CD8-positive, alpha-beta memory T cell (primary cell): ENCODE measurements at regions of chr22 and their contacts with region 1.

Region 1: DNA sequence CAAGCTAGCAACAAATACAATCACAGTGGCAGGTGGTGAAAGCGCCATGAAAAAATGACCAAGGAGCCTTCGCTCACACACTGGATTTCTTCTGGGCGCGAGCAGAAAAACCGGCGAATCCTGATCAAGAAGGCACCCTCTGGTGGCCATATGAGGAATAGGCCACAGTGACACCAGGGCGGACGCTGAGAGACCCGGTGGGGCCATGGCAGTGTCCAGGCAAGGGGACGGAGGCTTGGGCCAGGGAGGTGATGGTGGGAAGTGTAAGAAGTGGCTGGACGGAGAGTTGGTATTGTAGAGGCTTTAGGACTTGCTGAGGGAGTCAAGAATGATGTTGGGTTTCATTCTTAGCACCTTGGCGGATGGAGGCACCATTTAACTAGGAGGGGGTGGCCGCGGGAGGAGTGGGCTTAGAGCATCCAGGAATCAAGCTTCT is 16.9 kb upstream of the RAC2 start:
- DNase-seq: peak; percentile 42 to 79 (median 57)
- H3K4me3 ChIP-seq: no peak overlapping the region
- H3K4me3 Mint-ChIP-seq: peak overlapping the region in 3 of 7 donors; percentile 2 to 46 (median 41)
- H3K27ac ChIP-seq: no peak overlapping the region
- H3K27ac Mint-ChIP-seq: peak overlapping the region in 7 of 8 donors; percentile 12 to 86 (median 53)
- H3K4me1 ChIP-seq: peaks cover 23% of the 10 kb centered on the region
- H3K4me1 Mint-ChIP-seq: peaks cover 7 to 13% (median 10%) of the 10 kb centered on the region in 3 donors
- H3K27me3 ChIP-seq: no peaks in the 10 kb centered on the region
- H3K27me3 Mint-ChIP-seq: peaks cover 0 to 4% of the 10 kb centered on the region in 2 donors

Region 2: GRCh38 chr22:36946421-36947158 is 314.3 kb before region 1 on chr22:
- CTCF ChIA-PET with region 1: no interaction called
- POLR2A ChIA-PET with region 1: no interaction called
- DNase-seq: no peak
- H3K4me3 ChIP-seq: no peak overlapping the region
- H3K4me3 Mint-ChIP-seq: no peak overlapping the region
- H3K27ac ChIP-seq: no peak overlapping the region
- H3K27ac Mint-ChIP-seq: no peak overlapping the region
- H3K4me1 ChIP-seq: no peaks in the 10 kb centered on the region
- H3K4me1 Mint-ChIP-seq: no peaks in the 10 kb centered on the region
- H3K27me3 ChIP-seq: no peaks in the 10 kb centered on the region
- H3K27me3 Mint-ChIP-seq: peaks cover 7 to 26% of the 10 kb centered on the region in 2 donors

Region 3: DNA sequence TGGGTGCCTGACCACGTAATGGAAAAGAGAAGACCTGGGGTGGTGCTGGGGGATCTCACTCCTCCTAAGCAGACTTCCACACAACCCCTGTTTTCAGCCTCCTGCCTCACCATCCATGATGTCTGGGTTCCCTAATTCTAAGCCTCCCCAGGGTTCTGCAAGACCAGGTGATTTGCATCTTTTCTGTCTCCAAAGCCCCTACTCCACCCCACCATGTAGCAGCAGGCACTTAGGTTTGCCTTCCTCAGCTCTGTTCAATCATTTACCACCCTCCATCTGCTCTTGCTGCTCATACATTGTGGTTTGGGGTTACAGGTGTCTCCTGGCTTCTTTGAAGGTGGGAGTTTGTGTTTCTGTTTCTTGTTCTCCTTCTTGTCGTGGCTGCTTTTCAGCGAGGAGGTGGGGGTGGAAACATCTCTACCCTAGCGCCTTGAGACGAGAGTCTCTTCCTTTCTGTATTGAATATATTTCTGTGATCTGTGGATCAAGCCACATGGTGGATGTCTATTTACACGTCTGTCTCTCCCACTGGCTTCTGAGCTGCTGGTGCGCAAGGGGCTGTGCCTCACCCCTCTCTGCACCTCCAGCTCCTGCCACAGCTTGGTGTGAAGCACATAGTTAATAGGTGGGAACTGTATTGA is 42.0 kb before region 1 on chr22:
- CTCF ChIA-PET with region 1: interaction called, 29 read pairs
- POLR2A ChIA-PET with region 1: no interaction called
- DNase-seq: peak; percentile 36 to 94 (median 86)
- H3K4me3 ChIP-seq: peak overlapping the region; percentile 53
- H3K4me3 Mint-ChIP-seq: peak overlapping the region; percentile 6 to 68 (median 61)
- H3K27ac ChIP-seq: no peak overlapping the region
- H3K27ac Mint-ChIP-seq: peak overlapping the region; percentile 46 to 99 (median 94)
- H3K4me1 ChIP-seq: peaks cover 76% of the 10 kb centered on the region
- H3K4me1 Mint-ChIP-seq: peaks cover 63 to 83% (median 76%) of the 10 kb centered on the region in 3 donors
- H3K27me3 ChIP-seq: no peaks in the 10 kb centered on the region
- H3K27me3 Mint-ChIP-seq: no peaks in the 10 kb centered on the region

Region 4: DNA sequence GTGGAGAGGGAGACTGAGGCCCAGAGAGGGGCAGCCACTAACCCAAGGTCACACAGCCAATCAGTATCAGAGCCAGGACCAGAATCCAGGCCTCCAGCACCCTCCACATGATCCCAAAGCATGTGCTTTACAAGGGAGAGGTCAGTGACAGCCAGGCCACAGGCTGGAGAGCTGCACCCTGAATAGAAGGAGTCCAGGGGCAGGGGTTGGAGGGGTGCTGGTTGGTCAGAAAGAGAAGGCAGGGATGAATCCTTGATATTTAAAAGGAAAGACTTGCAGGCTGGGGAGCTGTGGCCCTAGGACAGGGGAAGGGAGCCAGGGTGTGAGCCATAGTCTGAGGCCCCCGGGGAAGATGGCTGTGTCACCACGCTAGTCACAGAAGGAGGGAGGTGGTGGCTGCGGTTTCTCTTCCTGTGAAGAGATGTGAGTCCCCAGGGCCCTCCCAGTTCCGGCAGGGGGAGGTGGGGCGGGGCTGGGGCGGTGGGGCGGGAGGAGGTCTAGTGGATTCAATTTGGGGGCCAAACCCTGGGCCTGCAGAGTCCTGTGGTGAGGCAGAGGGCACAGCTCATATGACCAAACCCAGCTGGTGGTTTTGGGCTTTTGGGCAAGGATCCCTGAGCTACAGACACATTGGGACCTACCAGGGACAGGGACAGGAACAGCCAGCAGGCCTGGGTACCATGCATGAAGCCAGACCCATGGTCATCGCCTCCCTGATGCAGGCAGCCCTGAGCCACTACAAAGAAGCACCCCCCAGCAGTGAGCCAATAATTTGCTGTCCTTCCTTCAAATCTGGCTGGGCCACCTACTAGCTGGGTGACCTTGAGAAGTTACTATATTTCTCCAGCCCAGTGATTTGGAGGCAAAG is 30.9 kb before region 1 on chr22:
- CTCF ChIA-PET with region 1: interaction called, 47 read pairs
- POLR2A ChIA-PET with region 1: interaction called, 5 read pairs
- DNase-seq: peak; percentile 87 to 96 (median 90)
- H3K4me3 ChIP-seq: peak overlapping the region; percentile 85
- H3K4me3 Mint-ChIP-seq: peak overlapping the region; percentile 76 to 89 (median 85)
- H3K27ac ChIP-seq: peak overlapping the region; percentile 93
- H3K27ac Mint-ChIP-seq: peak overlapping the region; percentile 98 to 100 (median 99)
- H3K4me1 ChIP-seq: peaks cover 94% of the 10 kb centered on the region
- H3K4me1 Mint-ChIP-seq: peaks cover 86 to 92% (median 92%) of the 10 kb centered on the region in 3 donors
- H3K27me3 ChIP-seq: no peaks in the 10 kb centered on the region
- H3K27me3 Mint-ChIP-seq: no peaks in the 10 kb centered on the region

Region 5: GRCh38 chr22:37244114-37244921 is 16.6 kb before region 1 on chr22 and contains the start of gene RAC2:
- CTCF ChIA-PET with region 1: interaction called, 233 read pairs
- POLR2A ChIA-PET with region 1: interaction called, 10 read pairs
- DNase-seq: peak; percentile 77 to 93 (median 83)
- H3K4me3 ChIP-seq: peak within 1 kb of the TSS; percentile 100
- H3K4me3 Mint-ChIP-seq: peak within 1 kb of the TSS; percentile 88 to 98 (median 93)
- H3K27ac ChIP-seq: peak within 1 kb of the TSS; percentile 91
- H3K27ac Mint-ChIP-seq: peak within 1 kb of the TSS; percentile 79 to 100 (median 98)
- H3K4me1 ChIP-seq: peaks cover 48% of the 10 kb centered on the region
- H3K4me1 Mint-ChIP-seq: peaks cover 49 to 58% (median 50%) of the 10 kb centered on the region in 3 donors
- H3K27me3 ChIP-seq: no peaks in the 10 kb centered on the region
- H3K27me3 Mint-ChIP-seq: no peaks in the 10 kb centered on the region
- total RNA-seq, gene RAC2: 433 to 452 TPM

Region 6: DNA sequence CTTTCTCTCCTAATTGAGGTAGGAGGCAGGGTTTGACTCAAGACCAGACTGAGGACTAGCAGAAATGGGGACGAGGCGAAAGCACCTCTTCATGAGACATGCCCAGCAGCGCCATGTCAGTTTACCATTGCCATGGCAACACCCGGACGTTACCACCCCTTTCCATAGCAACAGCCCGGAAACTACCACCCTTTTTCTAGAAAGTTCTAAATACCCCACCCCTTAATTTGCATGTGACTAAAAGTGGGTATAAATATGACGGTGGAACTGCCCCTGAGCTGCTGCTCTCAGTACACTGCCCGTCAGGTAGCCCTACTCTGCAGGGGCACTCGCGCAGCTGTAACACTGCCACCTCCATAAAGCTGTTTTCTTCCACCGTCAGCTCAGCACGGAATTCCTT is 10.9 kb before region 1 on chr22:
- CTCF ChIA-PET with region 1: interaction called, 233 read pairs
- POLR2A ChIA-PET with region 1: interaction called, 10 read pairs
- DNase-seq: no peak
- H3K4me3 ChIP-seq: no peak overlapping the region
- H3K4me3 Mint-ChIP-seq: peak overlapping the region in 1 of 7 donors; percentile 38
- H3K27ac ChIP-seq: no peak overlapping the region
- H3K27ac Mint-ChIP-seq: no peak overlapping the region
- H3K4me1 ChIP-seq: peaks cover 9% of the 10 kb centered on the region
- H3K4me1 Mint-ChIP-seq: peaks cover 8 to 12% (median 11%) of the 10 kb centered on the region in 3 donors
- H3K27me3 ChIP-seq: no peaks in the 10 kb centered on the region
- H3K27me3 Mint-ChIP-seq: peaks cover 2% of the 10 kb centered on the region in 2 donors

Region 7: GRCh38 chr22:37428649-37429586 is 168.0 kb after region 1 on chr22:
- CTCF ChIA-PET with region 1: interaction called, 17 read pairs
- POLR2A ChIA-PET with region 1: no interaction called
- DNase-seq: peak; percentile 42 to 73 (median 51)
- H3K4me3 ChIP-seq: no peak overlapping the region
- H3K4me3 Mint-ChIP-seq: peak overlapping the region in 3 of 7 donors; percentile 6 to 55 (median 32)
- H3K27ac ChIP-seq: no peak overlapping the region
- H3K27ac Mint-ChIP-seq: peak overlapping the region in 1 of 8 donors; percentile 7
- H3K4me1 ChIP-seq: peaks cover 6% of the 10 kb centered on the region
- H3K4me1 Mint-ChIP-seq: peaks cover 3 to 22% (median 6%) of the 10 kb centered on the region in 3 donors
- H3K27me3 ChIP-seq: peaks cover 31% of the 10 kb centered on the region
- H3K27me3 Mint-ChIP-seq: peaks cover 61 to 78% of the 10 kb centered on the region in 2 donors

Region 8: DNA sequence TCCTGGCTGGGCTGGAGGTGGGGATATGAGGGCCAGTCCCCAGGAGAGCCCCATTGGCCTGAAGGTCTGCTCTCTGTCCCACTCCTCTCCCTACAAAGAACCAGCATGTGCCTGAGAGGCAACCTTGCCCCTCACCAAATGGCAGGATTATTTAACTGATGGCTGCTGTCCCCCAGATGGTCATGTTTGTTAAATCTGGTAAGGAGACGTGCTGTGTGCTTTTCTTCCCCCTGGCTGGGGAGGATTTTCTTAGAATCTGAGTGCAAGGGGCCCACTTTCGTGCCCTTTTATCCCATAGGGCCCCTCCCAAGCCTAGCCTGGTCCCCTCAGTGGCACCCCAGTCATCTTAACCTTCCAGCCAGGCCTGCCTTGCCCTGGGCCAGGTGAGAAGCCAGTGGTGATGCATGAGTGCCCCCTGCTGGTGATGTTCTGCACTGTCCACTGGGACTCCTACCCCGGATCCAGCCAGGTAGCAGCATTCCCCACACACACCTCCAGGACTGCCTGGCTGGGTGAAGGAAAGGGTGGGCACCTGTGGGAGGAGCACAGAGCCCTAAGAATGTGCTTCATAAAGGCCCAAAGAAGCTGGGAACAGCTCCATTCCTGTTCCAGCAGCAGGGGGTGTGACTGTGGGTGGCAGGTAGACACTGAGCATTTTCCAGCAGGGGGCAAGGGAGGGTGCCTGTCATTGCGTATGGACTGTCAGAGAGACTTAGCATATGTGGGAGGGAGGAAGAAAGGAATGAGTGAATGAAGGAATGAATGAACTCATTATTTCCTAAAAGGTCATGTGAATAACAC is 196.4 kb after region 1 on chr22:
- CTCF ChIA-PET with region 1: interaction called, 21 read pairs
- POLR2A ChIA-PET with region 1: no interaction called
- DNase-seq: peak; percentile 64 to 86 (median 75)
- H3K4me3 ChIP-seq: no peak overlapping the region
- H3K4me3 Mint-ChIP-seq: no peak overlapping the region
- H3K27ac ChIP-seq: no peak overlapping the region
- H3K27ac Mint-ChIP-seq: no peak overlapping the region
- H3K4me1 ChIP-seq: no peaks in the 10 kb centered on the region
- H3K4me1 Mint-ChIP-seq: peaks cover 0 to 10% (median 4%) of the 10 kb centered on the region in 3 donors
- H3K27me3 ChIP-seq: no peaks in the 10 kb centered on the region
- H3K27me3 Mint-ChIP-seq: no peaks in the 10 kb centered on the region